ENCODE measurements at regions of chr17 and their contacts with region 1.

Region 1: GRCh38 chr17:3913531-3914311 is 2.5 kb downstream of the P2RX1 start:
- DNase-seq: peak; percentile 93
- ATAC-seq: peak; percentile 57
- H3K4me3 ChIP-seq: peak overlapping the region; percentile 48 to 72 (median 57)
- H3K4me3 Mint-ChIP-seq: peak overlapping the region; percentile 90
- H3K27ac ChIP-seq: peak overlapping the region; percentile 100
- H3K27ac Mint-ChIP-seq: peak overlapping the region; percentile 98
- H3K4me1 ChIP-seq: peaks cover 72 to 92% of the 10 kb centered on the region in 2 donors
- H3K4me1 Mint-ChIP-seq: peaks cover 80% of the 10 kb centered on the region
- H3K27me3 ChIP-seq: no peaks in the 10 kb centered on the region
- H3K27me3 Mint-ChIP-seq: no peaks in the 10 kb centered on the region
- CTCF ChIP-seq: peak; percentile 97

Region 2: GRCh38 chr17:3738562-3739295 is 175.0 kb before region 1 on chr17:
- CTCF ChIA-PET with region 1: interaction called, 12 read pairs
- POLR2A ChIA-PET with region 1: no interaction called
- intact Hi-C with region 1: no loop called
- DNase-seq: peak; percentile 44
- ATAC-seq: peak; percentile 44
- H3K4me3 ChIP-seq: no peak overlapping the region
- H3K4me3 Mint-ChIP-seq: no peak overlapping the region
- H3K27ac ChIP-seq: no peak overlapping the region
- H3K27ac Mint-ChIP-seq: peak overlapping the region; percentile 43
- H3K4me1 ChIP-seq: peaks cover 7 to 32% of the 10 kb centered on the region in 2 donors
- H3K4me1 Mint-ChIP-seq: peaks cover 38% of the 10 kb centered on the region
- H3K27me3 ChIP-seq: no peaks in the 10 kb centered on the region
- H3K27me3 Mint-ChIP-seq: no peaks in the 10 kb centered on the region
- CTCF ChIP-seq: no peak

Region 3: GRCh38 chr17:3859940-3860339 is 53.8 kb before region 1 on chr17:
- CTCF ChIA-PET with region 1: interaction called, 53 read pairs
- POLR2A ChIA-PET with region 1: interaction called, 3 read pairs
- intact Hi-C with region 1: loop called (anchors 2 kb)
- DNase-seq: no peak
- ATAC-seq: no peak
- H3K4me3 ChIP-seq: no peak overlapping the region
- H3K4me3 Mint-ChIP-seq: no peak overlapping the region
- H3K27ac ChIP-seq: no peak overlapping the region
- H3K27ac Mint-ChIP-seq: no peak overlapping the region
- H3K4me1 ChIP-seq: no peaks in the 10 kb centered on the region
- H3K4me1 Mint-ChIP-seq: no peaks in the 10 kb centered on the region
- H3K27me3 ChIP-seq: no peaks in the 10 kb centered on the region
- H3K27me3 Mint-ChIP-seq: no peaks in the 10 kb centered on the region
- CTCF ChIP-seq: no peak

Region 4: DNA sequence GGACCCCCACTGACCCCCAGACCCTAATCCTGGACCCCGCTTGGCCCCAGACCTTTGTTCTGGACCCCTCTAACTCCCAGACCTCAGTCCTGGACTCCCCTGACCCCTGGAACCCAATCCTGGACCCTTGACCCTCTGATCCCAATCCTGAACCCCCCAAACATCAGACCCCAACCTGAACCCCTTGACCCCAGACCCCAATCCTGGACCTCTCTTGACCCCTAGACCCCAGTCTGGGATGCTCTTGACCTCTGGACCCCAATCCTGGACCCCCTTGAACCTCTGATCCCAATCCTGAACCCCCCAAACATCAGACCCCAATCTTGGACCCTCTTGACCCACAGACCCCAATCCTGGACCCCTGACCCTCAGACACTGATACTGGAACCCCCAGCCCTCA is 16.0 kb after region 1 on chr17:
- CTCF ChIA-PET with region 1: interaction called, 30 read pairs
- POLR2A ChIA-PET with region 1: interaction called, 13 read pairs
- intact Hi-C with region 1: no loop called
- DNase-seq: no peak
- ATAC-seq: no peak
- H3K4me3 ChIP-seq: no peak overlapping the region
- H3K4me3 Mint-ChIP-seq: no peak overlapping the region
- H3K27ac ChIP-seq: peak overlapping the region in 1 of 2 donors; percentile 35
- H3K27ac Mint-ChIP-seq: no peak overlapping the region
- H3K4me1 ChIP-seq: no peaks in the 10 kb centered on the region
- H3K4me1 Mint-ChIP-seq: peaks cover 11% of the 10 kb centered on the region
- H3K27me3 ChIP-seq: no peaks in the 10 kb centered on the region
- H3K27me3 Mint-ChIP-seq: no peaks in the 10 kb centered on the region
- CTCF ChIP-seq: no peak

Region 5: DNA sequence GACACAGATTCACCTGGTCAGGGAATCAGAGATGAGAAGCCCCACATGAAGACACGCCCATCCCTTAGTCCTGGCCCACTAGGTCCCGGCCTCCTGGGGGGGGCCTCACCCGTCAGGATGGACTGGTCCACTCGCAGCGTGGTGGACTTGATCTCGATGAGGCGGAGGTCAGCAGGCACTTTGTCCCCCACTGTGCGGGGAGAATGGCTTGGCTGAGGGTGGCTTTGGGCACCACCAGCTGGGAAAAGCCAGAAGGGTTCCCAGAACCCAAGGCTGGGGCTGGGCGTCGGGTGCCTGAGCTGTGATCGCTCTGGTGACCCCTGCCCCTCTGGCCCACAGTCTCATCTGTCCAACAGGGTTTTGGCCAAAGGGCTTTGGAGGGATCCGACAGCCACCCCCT is 36.9 kb after region 1 on chr17:
- CTCF ChIA-PET with region 1: interaction called, 12 read pairs
- POLR2A ChIA-PET with region 1: interaction called, 10 read pairs
- intact Hi-C with region 1: no loop called
- DNase-seq: no peak
- ATAC-seq: no peak
- H3K4me3 ChIP-seq: no peak overlapping the region
- H3K4me3 Mint-ChIP-seq: no peak overlapping the region
- H3K27ac ChIP-seq: no peak overlapping the region
- H3K27ac Mint-ChIP-seq: no peak overlapping the region
- H3K4me1 ChIP-seq: peaks cover 0 to 10% of the 10 kb centered on the region in 2 donors
- H3K4me1 Mint-ChIP-seq: peaks cover 4% of the 10 kb centered on the region
- H3K27me3 ChIP-seq: no peaks in the 10 kb centered on the region
- H3K27me3 Mint-ChIP-seq: no peaks in the 10 kb centered on the region
- CTCF ChIP-seq: no peak

Region 6: DNA sequence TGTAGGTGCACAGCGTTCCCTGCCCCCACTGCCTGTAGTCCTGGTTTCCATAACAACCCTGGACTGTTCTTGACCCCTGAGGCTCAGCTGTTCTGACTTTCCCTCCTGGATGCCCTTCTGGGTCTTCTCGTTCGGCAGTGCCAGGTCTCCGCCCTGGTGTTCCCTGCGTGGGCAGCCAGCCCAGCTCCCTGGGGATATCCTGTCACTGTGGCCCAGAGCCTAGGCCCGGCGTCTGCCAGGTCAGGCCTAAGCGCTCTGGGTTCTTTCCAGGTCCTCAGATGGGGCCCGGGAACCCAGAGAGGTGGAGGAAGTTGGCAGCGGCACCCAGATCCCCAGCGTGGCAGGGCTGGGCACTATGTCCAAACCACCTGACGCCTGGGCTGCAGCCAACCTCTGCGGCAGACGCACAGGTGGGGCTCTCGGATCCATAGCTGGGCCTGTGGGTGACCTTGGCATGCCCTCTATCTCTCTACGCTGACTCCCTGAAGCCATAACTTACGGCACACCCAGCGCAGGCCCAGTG is 63.0 kb after region 1 on chr17:
- CTCF ChIA-PET with region 1: interaction called, 10 read pairs
- POLR2A ChIA-PET with region 1: interaction called, 6 read pairs
- intact Hi-C with region 1: no loop called
- DNase-seq: no peak
- ATAC-seq: no peak
- H3K4me3 ChIP-seq: no peak overlapping the region
- H3K4me3 Mint-ChIP-seq: no peak overlapping the region
- H3K27ac ChIP-seq: no peak overlapping the region
- H3K27ac Mint-ChIP-seq: no peak overlapping the region
- H3K4me1 ChIP-seq: peaks cover 20 to 30% of the 10 kb centered on the region in 2 donors
- H3K4me1 Mint-ChIP-seq: peaks cover 31% of the 10 kb centered on the region
- H3K27me3 ChIP-seq: no peaks in the 10 kb centered on the region
- H3K27me3 Mint-ChIP-seq: no peaks in the 10 kb centered on the region
- CTCF ChIP-seq: no peak

Measured in B cell (primary cell).